ENCODE measurements at regions of chr2 and their contacts with region 1.

Region 1: GRCh38 chr2:133774654-133775015 is 206.4 kb upstream of the NCKAP5 start:
- DNase-seq: no peak
- ATAC-seq: peak; percentile 54

Region 2: DNA sequence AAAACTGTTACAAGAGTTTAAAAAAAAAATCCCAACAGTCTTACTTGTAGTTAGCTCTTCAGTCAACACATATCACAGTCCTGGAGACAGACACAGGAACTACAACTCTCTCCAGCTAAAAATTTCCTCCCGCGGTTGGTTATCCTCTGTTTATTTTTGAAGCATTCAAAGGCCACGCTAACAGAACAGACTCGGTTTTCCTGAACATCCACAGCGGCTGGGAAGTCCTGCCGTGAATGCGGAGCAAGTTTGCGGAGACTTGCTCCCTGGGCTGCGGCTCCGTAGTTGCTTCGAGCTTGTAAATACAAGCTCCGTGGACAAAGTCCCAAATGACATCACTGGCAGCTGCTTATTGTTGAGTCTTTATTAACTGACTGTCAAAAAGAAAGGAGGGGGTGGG is 206.5 kb before region 1 on chr2 and contains the start of gene NCKAP5:
- intact Hi-C with region 1: loop called (anchors 1 kb)
- DNase-seq: no peak
- ATAC-seq: peak; percentile 47
- total RNA-seq, gene NCKAP5: 4.3 TPM

Region 3: GRCh38 chr2:133602530-133602929 is 172.1 kb before region 1 on chr2:
- intact Hi-C with region 1: loop called (anchors 1 kb)
- DNase-seq: no peak
- ATAC-seq: peak; percentile 71

Region 4: GRCh38 chr2:133733901-133734255 is 40.8 kb before region 1 on chr2:
- intact Hi-C with region 1: no loop called
- DNase-seq: no peak
- ATAC-seq: no peak

Measured in Right ventricle myocardium inferior (tissue), 1 donor.